ENCODE measurements at regions of chr16 and their contacts with region 1.

Region 1: GRCh38 chr16:50806099-50807062 is 64.5 kb downstream of the CYLD start:
- DNase-seq: peak; percentile 90
- ATAC-seq: peak; percentile 98
- H3K4me3 Mint-ChIP-seq: peak overlapping the region; percentile 72
- H3K27ac Mint-ChIP-seq: peak overlapping the region; percentile 78
- H3K4me1 Mint-ChIP-seq: peaks cover 11% of the 10 kb centered on the region
- H3K27me3 Mint-ChIP-seq: no peaks in the 10 kb centered on the region

Region 2: GRCh38 chr16:50024684-50025536 is 781.5 kb before region 1 on chr16 and contains the start of gene CNEP1R1:
- CTCF ChIA-PET with region 1: interaction called, 19 read pairs
- DNase-seq: peak; percentile 97
- ATAC-seq: peak; percentile 99
- H3K4me3 Mint-ChIP-seq: peak within 1 kb of the TSS; percentile 96
- H3K27ac Mint-ChIP-seq: peak within 1 kb of the TSS; percentile 90
- H3K4me1 Mint-ChIP-seq: peaks cover 20% of the 10 kb centered on the region
- H3K27me3 Mint-ChIP-seq: peaks cover 2% of the 10 kb centered on the region
- total RNA-seq, gene CNEP1R1: 27.7 to 28.4 TPM

Region 3: GRCh38 chr16:50354629-50355456 is 451.5 kb before region 1 on chr16:
- CTCF ChIA-PET with region 1: interaction called, 19 read pairs
- DNase-seq: no peak
- ATAC-seq: no peak
- H3K4me3 Mint-ChIP-seq: no peak overlapping the region
- H3K27ac Mint-ChIP-seq: no peak overlapping the region
- H3K4me1 Mint-ChIP-seq: peaks cover 11% of the 10 kb centered on the region
- H3K27me3 Mint-ChIP-seq: no peaks in the 10 kb centered on the region

Region 4: GRCh38 chr16:50665128-50665878 is 141.1 kb before region 1 on chr16:
- CTCF ChIA-PET with region 1: interaction called, 136 read pairs
- DNase-seq: peak; percentile 89
- ATAC-seq: peak; percentile 54
- H3K4me3 Mint-ChIP-seq: peak overlapping the region; percentile 51
- H3K27ac Mint-ChIP-seq: peak overlapping the region; percentile 92
- H3K4me1 Mint-ChIP-seq: peaks cover 42% of the 10 kb centered on the region
- H3K27me3 Mint-ChIP-seq: no peaks in the 10 kb centered on the region

Region 5: DNA sequence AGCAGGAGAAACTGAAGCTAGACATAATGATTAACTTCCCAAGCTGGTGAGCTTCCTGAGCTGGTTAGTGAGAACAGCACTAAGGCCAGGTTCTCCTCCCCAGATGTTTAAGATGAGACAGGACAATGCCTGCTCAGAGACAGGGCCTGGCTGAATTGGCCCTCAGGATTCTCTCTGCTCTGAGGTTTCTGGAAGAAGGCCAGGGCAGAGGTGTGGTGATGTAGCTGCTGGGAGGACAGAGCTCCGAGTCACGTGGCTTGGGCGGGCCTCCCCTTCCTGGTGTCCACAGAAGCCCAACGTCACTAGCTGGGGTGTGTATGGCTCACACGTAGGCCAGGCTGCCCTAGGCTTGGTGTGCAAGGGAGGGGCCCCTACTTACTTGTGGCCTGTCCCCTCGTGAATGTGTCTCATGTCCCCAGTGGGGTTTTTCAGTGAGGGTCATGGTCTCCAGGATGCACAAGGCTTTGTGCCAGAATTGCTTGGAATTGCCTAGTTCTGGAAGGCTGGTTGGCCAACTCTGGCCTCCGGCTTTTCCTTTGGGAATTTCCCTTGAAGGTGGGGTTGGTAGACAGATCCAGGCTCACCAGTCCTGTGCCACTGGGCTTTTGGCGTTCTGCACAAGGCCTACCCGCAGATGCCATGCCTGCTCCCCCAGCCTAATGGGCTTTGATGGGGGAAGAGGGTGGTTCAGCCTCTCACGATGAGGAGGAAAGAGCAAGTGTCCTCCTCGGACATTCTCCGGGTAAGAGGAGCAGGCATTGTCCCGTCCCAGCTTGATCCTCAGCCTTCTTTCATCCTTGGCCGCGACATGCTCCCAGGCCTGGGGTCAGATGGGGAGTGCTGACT is 109.6 kb before region 1 on chr16:
- CTCF ChIA-PET with region 1: interaction called, 14 read pairs
- DNase-seq: peak; percentile 86
- ATAC-seq: peak; percentile 75
- H3K4me3 Mint-ChIP-seq: peak overlapping the region; percentile 82
- H3K27ac Mint-ChIP-seq: peak overlapping the region; percentile 93
- H3K4me1 Mint-ChIP-seq: peaks cover 72% of the 10 kb centered on the region
- H3K27me3 Mint-ChIP-seq: no peaks in the 10 kb centered on the region

Region 6: GRCh38 chr16:50756473-50756872 is 49.9 kb before region 1 on chr16:
- CTCF ChIA-PET with region 1: interaction called, 18 read pairs
- DNase-seq: no peak
- ATAC-seq: no peak
- H3K4me3 Mint-ChIP-seq: no peak overlapping the region
- H3K27ac Mint-ChIP-seq: no peak overlapping the region
- H3K4me1 Mint-ChIP-seq: peaks cover 64% of the 10 kb centered on the region
- H3K27me3 Mint-ChIP-seq: no peaks in the 10 kb centered on the region

Measured in activated CD8-positive, alpha-beta memory T cell treated with anti-CD3 and anti-CD28 coated beads, Interleukin-2, amount 10 ng/mL, durations not matched to agents 7 days and 5 days (primary cell).